Dendritic cell treated with granulocyte-macrophage colony-stimulating factor and Interleukin-4, amounts not matched to agents 40 ng/mL and 50 ng/mL, for 4 days (primary cell): ENCODE measurements at regions of chr2 and their contacts with region 1.

Region 1: GRCh38 chr2:172555522-172556283 is at the start of gene PDK1:
- H3K4me3 Mint-ChIP-seq: peak within 1 kb of the TSS; percentile 80
- H3K27ac Mint-ChIP-seq: peak within 1 kb of the TSS; percentile 86
- H3K4me1 Mint-ChIP-seq: peaks cover 38% of the 10 kb centered on the region
- H3K27me3 Mint-ChIP-seq: peaks cover 7% of the 10 kb centered on the region

Region 2: GRCh38 chr2:171687287-171688128 is 868.2 kb before region 1 on chr2 and contains the start of gene DYNC1I2:
- intact Hi-C with region 1: loop called (anchors 5 kb)
- H3K4me3 Mint-ChIP-seq: peak within 1 kb of the TSS; percentile 89
- H3K27ac Mint-ChIP-seq: peak within 1 kb of the TSS; percentile 97
- H3K4me1 Mint-ChIP-seq: peaks cover 21% of the 10 kb centered on the region
- H3K27me3 Mint-ChIP-seq: peaks cover 3% of the 10 kb centered on the region